ENCODE measurements at regions of chr6 and their contacts with region 1.

Region 1: DNA sequence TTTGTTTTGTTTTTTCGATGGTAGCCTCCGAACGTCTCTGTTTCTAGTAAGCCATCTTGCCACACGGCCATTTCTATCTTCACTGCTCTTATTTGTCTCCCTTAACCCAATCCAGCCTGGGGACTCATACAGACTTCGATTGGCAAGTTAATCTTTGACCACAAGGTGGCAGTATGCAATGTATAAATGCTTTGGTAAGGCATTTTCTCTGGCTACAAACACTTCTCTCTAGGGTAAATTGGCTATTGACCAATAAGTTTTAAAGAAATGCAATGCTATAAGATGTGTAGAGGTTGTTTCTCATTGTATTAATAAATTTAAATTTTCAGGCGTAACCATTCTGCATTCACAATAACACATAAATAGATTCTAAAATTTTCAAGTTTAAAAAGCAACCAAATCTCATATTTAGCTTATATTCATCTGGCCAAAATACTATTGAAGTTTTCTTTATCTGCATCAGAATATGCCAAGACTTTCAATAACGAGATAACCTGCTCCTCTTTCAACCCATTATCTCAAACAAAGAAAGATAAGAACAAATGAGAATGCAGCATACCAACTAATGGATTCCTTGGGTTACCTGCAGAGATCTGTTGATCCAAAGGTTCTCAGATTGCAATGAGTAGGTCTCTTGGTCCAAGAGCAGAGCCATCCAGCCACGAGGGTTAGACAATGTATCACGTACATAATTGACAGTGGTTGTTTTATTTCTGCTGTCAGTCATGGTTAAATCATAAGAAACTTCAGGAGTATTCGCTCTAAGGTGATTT is 231.9 kb downstream of the PKHD1 start:
- ATAC-seq: peak in 4 of 8 experiments; percentile 43 to 84 (median 60)
- H3K4me3 ChIP-seq: no peak overlapping the region
- H3K27ac ChIP-seq: no peak overlapping the region
- H3K4me1 ChIP-seq: no peaks in the 10 kb centered on the region

Region 2: GRCh38 chr6:51959744-51960383 is 104.4 kb after region 1 on chr6:
- in situ Hi-C with region 1: loop called in 2 of 9 experiments (anchors 10 to 25 kb)
- ATAC-seq: peak; percentile 40 to 92 (median 72)
- H3K4me3 ChIP-seq: no peak overlapping the region
- H3K27ac ChIP-seq: no peak overlapping the region
- H3K4me1 ChIP-seq: no peaks in the 10 kb centered on the region

Measured in motor neuron (in vitro differentiated cells).